Sigmoid colon (tissue), 7 donors: ENCODE measurements at regions of chr1 and their contacts with region 1.

Region 1: GRCh38 chr1:172909606-172910326 is 141.0 kb downstream of the TNFSF18 start:
- DNase-seq: no peak
- H3K4me3 ChIP-seq: no peak overlapping the region
- H3K27ac ChIP-seq: no peak overlapping the region
- H3K4me1 ChIP-seq: peaks cover 0 to 7% (median 5%) of the 10 kb centered on the region in 4 donors
- H3K27me3 ChIP-seq: no peaks in the 10 kb centered on the region
- CTCF ChIP-seq: no peak
- EP300 ChIP-seq: no peak
- POLR2A ChIP-seq: no peak

Region 2: GRCh38 chr1:172487550-172487949 is 422.2 kb before region 1 on chr1:
- intact Hi-C with region 1: no loop called
- DNase-seq: no peak
- H3K4me3 ChIP-seq: no peak overlapping the region
- H3K27ac ChIP-seq: no peak overlapping the region
- H3K4me1 ChIP-seq: no peaks in the 10 kb centered on the region
- H3K27me3 ChIP-seq: no peaks in the 10 kb centered on the region
- CTCF ChIP-seq: no peak
- EP300 ChIP-seq: no peak
- POLR2A ChIP-seq: no peak

Region 3: DNA sequence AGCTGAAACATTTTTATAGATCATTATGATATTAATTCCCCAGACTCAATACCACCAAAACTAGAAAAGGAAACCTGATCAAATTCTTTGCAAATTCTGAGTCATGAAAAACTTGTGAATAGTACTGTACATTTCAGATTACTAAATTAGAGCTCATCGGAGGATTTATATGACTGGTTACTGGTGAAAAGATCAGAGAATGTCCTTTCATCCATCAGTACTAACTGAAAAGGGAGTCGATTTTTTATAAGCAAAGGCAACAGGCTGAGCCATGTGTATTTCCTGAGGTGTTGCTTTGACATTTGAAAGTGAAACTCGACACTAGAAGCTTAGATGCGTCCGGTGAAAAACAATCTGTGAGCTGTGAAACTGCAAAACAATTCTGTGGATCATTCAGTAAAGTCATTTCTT is 14.7 kb before region 1 on chr1:
- intact Hi-C with region 1: loop called (anchors 2 kb)
- DNase-seq: no peak
- H3K4me3 ChIP-seq: peak overlapping the region in 1 of 4 donors; percentile 12
- H3K27ac ChIP-seq: peak overlapping the region in 2 of 4 donors; percentile 10 to 40
- H3K4me1 ChIP-seq: peaks cover 0 to 12% (median 2%) of the 10 kb centered on the region in 4 donors
- H3K27me3 ChIP-seq: no peaks in the 10 kb centered on the region
- CTCF ChIP-seq: no peak
- EP300 ChIP-seq: no peak
- POLR2A ChIP-seq: no peak